ENCODE measurements at regions of chr19 and their contacts with region 1.

Region 1: GRCh38 chr19:34677386-34678084 is at the start of gene ZNF302:
- DNase-seq: peak; percentile 97
- H3K4me3 ChIP-seq: peak within 1 kb of the TSS; percentile 80
- H3K27ac ChIP-seq: peak within 1 kb of the TSS; percentile 66
- H3K4me1 ChIP-seq: peaks cover 20% of the 10 kb centered on the region
- CTCF ChIP-seq: no peak
- total RNA-seq, gene ZNF302: 23.9 and 24.6 TPM in 2 replicates

Region 2: DNA sequence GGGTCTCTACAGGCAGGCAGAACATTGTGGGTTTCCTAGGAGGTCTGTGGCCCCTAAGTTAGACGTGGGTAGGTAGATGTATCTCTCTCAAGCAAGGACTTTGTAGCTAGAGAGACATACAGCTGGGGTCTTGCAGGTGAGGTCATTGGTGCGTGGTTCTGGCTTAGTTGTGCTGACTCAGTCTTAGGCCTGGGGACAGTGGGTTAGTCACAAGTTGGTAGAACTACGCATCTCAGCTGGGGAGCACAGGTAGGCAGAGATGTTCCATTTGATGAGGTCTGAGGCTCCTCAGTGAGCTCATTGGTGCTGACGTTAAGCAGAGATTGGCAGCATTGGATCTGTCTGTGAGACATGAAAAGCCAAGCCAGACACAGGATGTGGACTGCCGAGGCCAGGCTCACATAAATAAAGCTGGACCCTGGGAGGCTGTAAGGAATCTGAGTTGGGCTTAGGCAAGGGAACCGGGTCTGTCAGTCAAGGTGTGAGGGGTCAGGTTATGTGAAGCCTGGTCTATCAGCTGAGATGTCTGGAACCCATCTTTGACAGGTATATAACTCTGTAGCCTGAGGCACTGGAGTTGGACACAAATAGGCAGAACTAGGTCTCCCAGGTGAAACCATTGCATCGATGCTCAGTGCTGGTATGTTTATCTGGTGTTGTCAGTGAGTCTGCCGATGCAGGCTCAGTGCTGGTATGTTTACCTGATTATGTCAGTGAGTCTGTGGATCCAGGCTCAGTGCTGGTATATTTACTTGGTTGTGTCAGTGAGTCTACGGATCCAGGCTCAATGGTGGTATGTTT is 290.7 kb before region 1 on chr19:
- CTCF ChIA-PET with region 1: no interaction called
- POLR2A ChIA-PET with region 1: no interaction called
- intact Hi-C with region 1: no loop called
- DNase-seq: no peak
- H3K4me3 ChIP-seq: no peak overlapping the region
- H3K27ac ChIP-seq: no peak overlapping the region
- H3K4me1 ChIP-seq: no peaks in the 10 kb centered on the region
- CTCF ChIP-seq: no peak

Region 3: GRCh38 chr19:34480971-34481821 is 196.3 kb before region 1 on chr19 and contains the start of gene WTIP:
- CTCF ChIA-PET with region 1: no interaction called
- POLR2A ChIA-PET with region 1: no interaction called
- intact Hi-C with region 1: no loop called
- DNase-seq: no peak
- H3K4me3 ChIP-seq: no peak within 1 kb of the TSS
- H3K27ac ChIP-seq: no peak within 1 kb of the TSS
- H3K4me1 ChIP-seq: no peaks in the 10 kb centered on the region
- CTCF ChIP-seq: no peak
- total RNA-seq, gene WTIP: 0.67 and 1.4 TPM in 2 replicates

Region 4: GRCh38 chr19:34733826-34734600 is 56.5 kb after region 1 on chr19 and contains the start of gene ZNF181:
- CTCF ChIA-PET with region 1: no interaction called
- POLR2A ChIA-PET with region 1: interaction called, 4 read pairs
- intact Hi-C with region 1: loop called (anchors 1 kb)
- DNase-seq: peak; percentile 87
- H3K4me3 ChIP-seq: peak within 1 kb of the TSS; percentile 77
- H3K27ac ChIP-seq: peak within 1 kb of the TSS; percentile 62
- H3K4me1 ChIP-seq: peaks cover 17% of the 10 kb centered on the region
- CTCF ChIP-seq: no peak; the same call in 1 of the 2 replicates
- total RNA-seq, gene ZNF181: 13.0 and 18.8 TPM in 2 replicates

Measured in OCI-LY7 (cell line).